AG04450 (cell line): ENCODE measurements at regions of chr2 and their contacts with region 1.

Region 1: GRCh38 chr2:222973237-222973636 is 78.8 kb upstream of the KCNE4 start:
- DNase-seq: no peak
- H3K4me3 ChIP-seq: no peak overlapping the region
- H3K27ac ChIP-seq: no peak overlapping the region
- H3K27me3 ChIP-seq: no peaks in the 10 kb centered on the region
- CTCF ChIP-seq: no peak

Region 2: GRCh38 chr2:222878877-222879603 is 94.2 kb before region 1 on chr2:
- CTCF ChIA-PET with region 1: no interaction called
- POLR2A ChIA-PET with region 1: no interaction called
- DNase-seq: no peak
- H3K4me3 ChIP-seq: no peak overlapping the region
- H3K27ac ChIP-seq: no peak overlapping the region
- H3K27me3 ChIP-seq: no peaks in the 10 kb centered on the region
- CTCF ChIP-seq: no peak

Region 3: DNA sequence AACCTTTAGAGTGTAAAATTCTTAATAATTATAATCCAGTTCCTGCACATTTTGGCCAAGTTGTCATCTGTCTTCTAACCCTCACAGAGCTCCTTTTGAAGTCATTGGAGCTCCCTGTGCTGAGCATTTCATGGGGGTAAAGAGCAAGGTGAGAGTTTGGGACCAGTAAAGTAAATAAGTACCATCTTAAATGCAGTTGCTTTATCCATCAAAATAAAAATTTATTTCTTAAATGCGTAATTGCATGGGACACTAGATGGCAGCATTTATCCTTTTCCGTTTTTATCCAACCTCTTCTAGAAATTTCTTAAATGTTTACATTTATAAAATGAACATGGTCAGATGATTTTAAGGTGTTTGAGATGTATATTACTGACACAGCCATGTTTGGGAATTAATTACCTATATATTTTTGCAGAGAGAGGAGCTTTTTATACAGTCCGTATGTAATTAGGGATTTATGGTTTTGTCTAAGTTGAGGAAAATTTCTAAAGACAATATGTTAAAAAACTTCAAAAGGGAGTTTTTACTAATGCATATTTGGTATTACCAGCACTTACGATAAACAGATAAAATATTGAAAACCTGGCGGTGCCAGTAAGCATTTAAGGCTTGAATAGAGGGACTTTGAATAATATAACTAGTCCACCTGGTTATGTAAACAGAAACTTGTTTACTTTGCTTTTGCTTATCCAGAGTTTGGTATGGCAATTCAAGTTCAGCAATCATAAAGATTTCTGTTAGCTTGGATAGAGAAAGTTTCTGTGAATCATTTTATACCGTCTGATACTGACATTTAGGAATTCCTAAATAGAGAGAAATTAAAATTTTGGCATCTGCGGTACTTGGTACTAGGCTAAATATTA is 57.9 kb before region 1 on chr2:
- CTCF ChIA-PET with region 1: interaction called, 13 read pairs
- POLR2A ChIA-PET with region 1: no interaction called
- DNase-seq: no peak
- H3K4me3 ChIP-seq: no peak overlapping the region
- H3K27ac ChIP-seq: no peak overlapping the region
- H3K27me3 ChIP-seq: no peaks in the 10 kb centered on the region
- CTCF ChIP-seq: peak; percentile 61

Region 4: DNA sequence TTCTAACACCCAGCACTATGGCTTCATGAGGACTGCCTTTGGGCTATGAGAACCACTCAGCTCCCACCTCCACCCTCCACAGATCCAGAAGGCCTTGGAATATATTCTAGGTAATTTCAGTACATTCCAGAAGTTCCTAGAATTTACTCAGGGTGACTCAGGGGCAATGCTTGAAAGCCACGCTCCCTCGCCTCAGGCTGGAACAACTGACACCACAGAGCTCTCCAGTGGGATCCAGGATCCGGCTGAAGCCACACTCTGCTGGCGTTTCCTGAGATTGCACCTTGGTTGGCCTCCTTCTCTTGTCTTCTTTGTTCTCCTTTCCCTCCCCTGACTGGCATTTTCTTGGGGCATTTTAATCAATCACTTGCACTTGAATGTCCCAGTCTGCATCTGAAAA is 13.9 kb before region 1 on chr2:
- CTCF ChIA-PET with region 1: interaction called, 30 read pairs
- POLR2A ChIA-PET with region 1: no interaction called
- DNase-seq: peak; percentile 72
- H3K4me3 ChIP-seq: no peak overlapping the region
- H3K27ac ChIP-seq: peak overlapping the region; percentile 52
- H3K27me3 ChIP-seq: no peaks in the 10 kb centered on the region
- CTCF ChIP-seq: peak; percentile 55

Region 5: GRCh38 chr2:223084873-223085272 is 111.6 kb after region 1 on chr2:
- CTCF ChIA-PET with region 1: interaction called, 16 read pairs
- POLR2A ChIA-PET with region 1: no interaction called
- DNase-seq: no peak
- H3K4me3 ChIP-seq: no peak overlapping the region
- H3K27ac ChIP-seq: no peak overlapping the region
- H3K27me3 ChIP-seq: no peaks in the 10 kb centered on the region
- CTCF ChIP-seq: no peak

Region 6: GRCh38 chr2:223101340-223102039 is 128.3 kb after region 1 on chr2:
- CTCF ChIA-PET with region 1: interaction called, 63 read pairs
- POLR2A ChIA-PET with region 1: no interaction called
- DNase-seq: no peak
- H3K4me3 ChIP-seq: no peak overlapping the region
- H3K27ac ChIP-seq: no peak overlapping the region
- H3K27me3 ChIP-seq: no peaks in the 10 kb centered on the region
- CTCF ChIP-seq: peak; percentile 66

Region 7: GRCh38 chr2:223247136-223247535 is 273.9 kb after region 1 on chr2:
- CTCF ChIA-PET with region 1: interaction called, 19 read pairs
- POLR2A ChIA-PET with region 1: no interaction called
- DNase-seq: no peak
- H3K4me3 ChIP-seq: no peak overlapping the region
- H3K27ac ChIP-seq: no peak overlapping the region
- H3K27me3 ChIP-seq: no peaks in the 10 kb centered on the region
- CTCF ChIP-seq: peak; percentile 62

Region 8: DNA sequence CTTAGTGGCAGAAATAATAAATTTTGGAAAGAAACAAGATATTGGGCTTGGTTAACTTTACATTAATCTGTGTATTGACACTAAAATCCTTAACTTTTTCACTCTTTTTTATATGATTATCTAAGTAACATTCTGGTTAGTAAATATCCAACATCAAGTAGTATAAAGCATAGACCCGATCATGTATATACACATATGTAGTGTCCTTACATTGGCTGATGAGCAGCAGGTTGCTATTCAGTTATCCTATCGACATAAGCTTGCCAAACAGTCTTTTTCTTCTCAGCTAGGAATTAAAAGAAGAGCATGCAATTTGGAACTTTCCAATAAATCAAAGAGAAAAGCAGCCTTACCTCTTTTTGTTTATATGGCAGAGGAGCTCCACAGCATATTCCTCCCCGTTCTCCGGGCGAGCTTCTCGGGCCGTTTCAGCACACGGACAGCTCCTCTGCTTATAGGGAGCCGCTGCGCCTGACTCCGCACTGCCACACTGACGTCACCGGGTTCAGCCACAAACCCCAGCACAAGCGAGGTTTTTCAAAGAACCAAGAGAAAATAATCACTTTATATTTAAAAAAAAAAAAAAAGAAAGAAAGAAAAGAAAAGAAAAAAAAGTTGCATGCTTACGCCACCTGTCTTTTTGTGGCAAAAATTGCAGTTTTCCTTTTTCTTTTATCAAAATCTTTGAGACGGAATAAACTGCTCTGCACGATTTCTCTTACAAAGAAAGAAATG is 628.9 kb after region 1 on chr2 and contains the start of gene SCG2:
- CTCF ChIA-PET with region 1: interaction called, 11 read pairs
- POLR2A ChIA-PET with region 1: no interaction called
- DNase-seq: peak; percentile 87
- H3K4me3 ChIP-seq: no peak within 1 kb of the TSS; the same call in 1 of the 2 replicates
- H3K27ac ChIP-seq: no peak within 1 kb of the TSS
- H3K27me3 ChIP-seq: no peaks in the 10 kb centered on the region
- CTCF ChIP-seq: peak; percentile 48
- polyA plus RNA-seq, gene SCG2: 1.5 and 1.8 TPM in 2 replicates